ENCODE measurements at regions of chr19 and their contacts with region 1.

Region 1: GRCh38 chr19:42634409-42635232 is 39.9 kb upstream of the CEACAM8 start:
- DNase-seq: no peak
- H3K4me3 ChIP-seq: no peak overlapping the region
- CTCF ChIP-seq: peak; percentile 64

Region 2: GRCh38 chr19:42655748-42656147 is 21.1 kb after region 1 on chr19:
- CTCF ChIA-PET with region 1: interaction called, 10 read pairs
- POLR2A ChIA-PET with region 1: no interaction called
- DNase-seq: no peak
- H3K4me3 ChIP-seq: no peak overlapping the region
- CTCF ChIP-seq: no peak